ENCODE measurements at regions of chr20 and their contacts with region 1.

Region 1: GRCh38 chr20:13101706-13102105 is 92.9 kb downstream of the SPTLC3 start:
- DNase-seq: peak; percentile 60
- H3K4me3 ChIP-seq: no peak overlapping the region
- H3K27ac ChIP-seq: no peak overlapping the region
- H3K4me1 ChIP-seq: no peaks in the 10 kb centered on the region; the same call in 1 of the 2 replicates
- H3K27me3 ChIP-seq: no peaks in the 10 kb centered on the region; the same call in 1 of the 2 replicates

Region 2: DNA sequence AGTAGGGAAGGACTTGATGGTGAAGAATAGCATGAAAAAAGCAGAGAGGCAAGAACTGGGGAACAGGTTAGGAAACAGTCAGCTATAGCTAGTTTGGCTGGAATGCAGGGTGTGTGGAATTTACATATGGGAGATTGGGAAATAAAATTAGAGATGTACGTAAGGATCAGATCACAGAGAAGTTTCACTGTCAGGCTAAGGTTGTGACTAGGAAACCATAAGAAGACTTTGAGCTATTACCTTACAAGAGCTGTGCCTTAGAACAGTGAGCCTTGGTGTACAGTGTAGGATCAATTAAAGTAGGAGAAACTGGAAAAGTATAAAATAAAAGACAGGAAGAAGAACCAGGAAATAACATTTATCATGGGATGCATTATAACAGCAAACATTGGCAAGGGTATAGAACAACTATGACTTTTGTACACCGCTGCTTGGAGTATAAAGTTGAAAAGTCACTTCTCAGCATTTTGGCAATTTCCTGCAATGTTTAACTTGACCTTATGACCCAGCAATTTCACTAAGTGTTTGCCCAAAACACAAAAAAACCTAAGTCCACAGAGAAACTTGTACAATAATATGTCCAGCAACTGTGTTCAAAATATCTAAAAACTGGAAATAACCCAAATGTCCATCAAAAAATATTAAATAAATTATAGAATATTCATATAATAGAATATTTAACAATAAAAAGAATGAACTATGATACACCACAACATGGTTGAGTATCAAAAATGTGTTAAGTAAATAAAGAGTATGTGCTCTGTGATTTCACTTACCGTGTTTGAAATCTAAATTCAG is 124.2 kb before region 1 on chr20:
- in situ Hi-C with region 1: loop called (anchors 5 kb)
- DNase-seq: no peak
- H3K4me3 ChIP-seq: no peak overlapping the region
- H3K27ac ChIP-seq: no peak overlapping the region
- H3K4me1 ChIP-seq: no peaks in the 10 kb centered on the region
- H3K27me3 ChIP-seq: no peaks in the 10 kb centered on the region; the same call in none of the 2 replicates

Measured in GM23248 (cell line).